ENCODE measurements at regions of chr14 and their contacts with region 1.

Region 1: DNA sequence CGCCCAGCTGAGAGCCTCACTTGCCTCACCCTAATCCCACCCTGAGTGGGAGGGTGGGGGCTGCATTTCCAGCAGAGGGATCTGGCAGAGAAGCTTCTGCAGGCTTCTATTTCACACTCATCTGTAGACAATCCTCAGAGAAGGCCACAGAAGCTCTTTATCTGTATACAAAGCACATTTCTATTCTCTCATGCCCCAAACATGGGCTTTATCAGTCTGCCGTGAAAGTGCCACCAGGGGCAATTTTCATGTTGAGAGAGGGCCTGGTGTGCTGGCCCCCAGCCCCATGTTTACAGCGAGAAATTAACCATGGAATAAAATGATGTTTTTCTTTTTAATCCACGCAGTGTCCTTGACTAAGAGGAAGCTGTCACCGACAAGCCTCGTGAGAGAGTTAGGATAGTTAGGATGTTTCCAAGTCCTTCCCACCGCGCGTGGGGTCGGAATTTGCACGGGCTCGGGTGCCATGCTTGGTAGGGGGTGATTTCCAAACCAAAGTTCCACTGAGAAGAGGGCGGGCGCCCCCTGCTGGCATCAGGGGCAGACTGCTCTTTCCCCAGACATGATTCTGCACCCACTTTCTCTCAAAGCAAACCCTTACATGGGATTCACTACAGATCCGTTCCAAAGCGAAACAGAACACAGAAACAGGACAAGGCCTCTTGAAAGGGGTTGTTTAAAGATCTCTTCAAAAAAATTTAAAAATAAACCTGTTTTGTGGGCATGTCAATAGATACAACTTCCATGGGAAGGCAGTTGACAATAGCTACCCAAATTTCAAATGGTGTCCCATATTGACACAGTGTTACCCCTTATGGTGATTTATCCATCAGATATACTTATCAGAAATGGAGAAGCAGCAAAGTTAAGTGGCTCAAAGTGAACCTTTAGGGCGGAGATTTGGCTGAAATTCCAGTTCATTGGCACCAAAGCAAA is 19.4 kb downstream of the BDKRB1 start:
- DNase-seq: peak; percentile 20 to 24
- ATAC-seq: peak in 1 of 2 donors; percentile 32
- H3K4me3 ChIP-seq: no peak overlapping the region
- H3K27ac ChIP-seq: no peak overlapping the region
- H3K4me1 ChIP-seq: no peaks in the 10 kb centered on the region
- H3K27me3 ChIP-seq: no peaks in the 10 kb centered on the region
- CTCF ChIP-seq: peak; percentile 69 to 86 (median 83)
- POLR2A ChIP-seq: no peak

Region 2: DNA sequence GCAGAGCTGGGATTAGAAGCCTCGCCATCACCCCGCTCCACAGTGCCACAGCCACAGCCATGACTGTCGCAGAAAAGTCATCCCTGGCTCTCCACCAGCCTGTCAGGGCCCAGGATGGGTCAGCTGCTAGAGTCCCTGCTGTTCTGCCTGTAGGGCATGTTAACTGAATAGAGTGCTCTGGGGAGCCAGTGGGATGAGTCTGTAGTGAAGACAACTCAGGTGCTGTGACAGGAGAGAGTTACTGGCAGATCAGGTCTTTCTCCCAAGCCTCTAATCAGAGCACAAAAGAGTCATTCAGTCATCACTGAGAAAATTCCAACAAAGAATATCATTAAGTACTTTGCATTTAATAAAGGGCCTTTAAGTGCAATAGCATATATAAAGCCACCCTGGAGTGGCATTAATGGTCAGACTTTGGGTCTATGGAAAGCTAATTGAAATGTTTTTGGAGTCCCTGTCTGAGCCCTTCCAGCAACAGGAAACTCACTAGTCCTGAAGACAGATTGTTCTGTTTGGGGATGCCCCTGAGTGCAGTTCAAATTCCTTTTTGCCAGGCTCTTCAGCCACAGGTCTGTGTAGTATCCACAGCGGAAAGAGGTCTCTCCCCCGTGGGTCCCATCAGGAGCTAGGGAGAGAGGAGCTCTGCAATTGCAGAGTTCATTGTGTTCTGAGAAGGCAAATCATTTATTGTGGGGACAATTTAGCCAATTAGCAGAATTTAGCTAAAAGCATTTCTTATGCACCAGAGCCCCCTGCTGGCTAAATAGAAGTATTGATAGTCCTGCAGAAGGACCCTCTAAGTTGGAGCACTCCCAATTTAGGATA is 281.5 kb before region 1 on chr14:
- in situ Hi-C with region 1: no loop called
- intact Hi-C with region 1: loop called (anchors 5 kb)
- DNase-seq: no peak
- ATAC-seq: no peak
- H3K4me3 ChIP-seq: no peak overlapping the region
- H3K27ac ChIP-seq: no peak overlapping the region
- H3K4me1 ChIP-seq: no peaks in the 10 kb centered on the region
- H3K27me3 ChIP-seq: peaks cover 0 to 8% (median 8%) of the 10 kb centered on the region in 3 donors
- CTCF ChIP-seq: peak in 4 of 5 experiments; percentile 37 to 61 (median 44)
- POLR2A ChIP-seq: no peak

Region 3: GRCh38 chr14:96564389-96564788 is 288.9 kb after region 1 on chr14:
- in situ Hi-C with region 1: no loop called
- intact Hi-C with region 1: no loop called
- DNase-seq: no peak
- ATAC-seq: no peak
- H3K4me3 ChIP-seq: no peak overlapping the region
- H3K27ac ChIP-seq: no peak overlapping the region
- H3K4me1 ChIP-seq: no peaks in the 10 kb centered on the region
- H3K27me3 ChIP-seq: no peaks in the 10 kb centered on the region
- CTCF ChIP-seq: no peak
- POLR2A ChIP-seq: no peak

Measured in gastrocnemius medialis (tissue), 4 donors.